Panc1 (cell line): ENCODE measurements at regions of chr7 and their contacts with region 1.

Region 1: GRCh38 chr7:16801111-16801542 is 3.7 kb downstream of the AGR2 start:
- DNase-seq: no peak
- ATAC-seq: peak; percentile 43; the same call in 1 of the 2 replicates
- H3K4me3 ChIP-seq: no peak overlapping the region
- H3K27ac ChIP-seq: peak overlapping the region; percentile 75
- H3K4me1 ChIP-seq: peaks cover 36% of the 10 kb centered on the region
- H3K27me3 ChIP-seq: no peaks in the 10 kb centered on the region
- CTCF ChIP-seq: peak; percentile 75; the same call in 1 of the 2 replicates

Region 2: DNA sequence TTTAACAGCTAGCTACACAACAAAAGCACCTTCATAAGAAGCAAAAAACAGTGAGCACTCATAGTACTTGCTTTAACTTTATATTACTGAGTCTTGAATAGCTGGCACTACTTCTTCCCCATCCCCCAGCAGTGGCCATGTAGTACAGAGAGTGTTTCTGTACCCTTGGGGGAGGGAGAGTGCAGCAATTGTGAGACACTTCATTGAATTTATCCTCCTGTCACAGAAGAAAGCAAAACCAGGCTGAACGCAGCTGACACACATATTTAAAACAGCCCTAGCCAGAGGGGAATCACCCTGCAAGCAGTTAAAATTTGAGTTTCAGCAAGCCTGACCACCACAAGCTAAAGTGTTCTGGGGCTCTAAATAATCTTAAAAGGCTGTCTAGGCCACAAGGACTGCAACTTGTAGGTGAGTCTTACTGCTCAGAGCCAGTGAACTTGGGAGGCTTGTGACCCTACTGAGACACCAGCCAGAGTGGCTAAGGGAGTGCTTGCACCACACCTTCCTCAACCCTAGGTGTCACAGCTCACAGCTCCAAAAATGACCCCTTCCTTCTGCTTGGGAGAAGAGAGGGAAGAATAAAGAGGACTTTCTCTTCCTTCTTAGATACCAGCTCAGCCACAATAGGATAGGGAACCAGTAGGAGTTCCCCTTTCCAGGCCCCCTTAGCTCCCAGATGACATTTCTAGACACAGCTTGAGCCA is 1017.0 kb before region 1 on chr7:
- CTCF ChIA-PET with region 1: no interaction called
- POLR2A ChIA-PET with region 1: no interaction called
- in situ Hi-C with region 1: no loop called
- intact Hi-C with region 1: no loop called
- DNase-seq: no peak
- ATAC-seq: no peak
- H3K4me3 ChIP-seq: no peak overlapping the region
- H3K27ac ChIP-seq: no peak overlapping the region
- H3K4me1 ChIP-seq: no peaks in the 10 kb centered on the region
- H3K27me3 ChIP-seq: no peaks in the 10 kb centered on the region
- CTCF ChIP-seq: no peak

Region 3: DNA sequence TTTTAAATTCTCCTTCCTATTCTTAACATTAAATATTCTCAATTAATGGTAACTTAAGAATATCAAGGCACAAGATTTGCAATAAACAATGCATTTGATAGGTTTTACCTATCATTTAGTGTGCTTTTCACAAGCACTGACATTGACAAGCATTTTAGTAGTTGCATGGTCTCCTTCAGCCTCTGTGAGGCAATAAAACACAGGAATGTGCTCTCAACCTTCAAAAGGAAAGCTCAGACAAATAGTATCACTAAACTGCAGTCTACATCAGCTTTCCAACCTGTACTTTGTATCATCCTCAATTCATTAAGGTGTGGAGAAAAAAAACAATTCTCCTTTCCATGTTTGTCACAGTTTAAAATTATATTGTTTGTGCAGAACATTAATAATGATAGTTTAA is 98.7 kb before region 1 on chr7:
- CTCF ChIA-PET with region 1: interaction called, 5 read pairs
- POLR2A ChIA-PET with region 1: no interaction called
- in situ Hi-C with region 1: no loop called
- intact Hi-C with region 1: loop called (anchors 5 kb)
- DNase-seq: no peak
- ATAC-seq: no peak
- H3K4me3 ChIP-seq: no peak overlapping the region
- H3K27ac ChIP-seq: no peak overlapping the region
- H3K4me1 ChIP-seq: no peaks in the 10 kb centered on the region
- H3K27me3 ChIP-seq: no peaks in the 10 kb centered on the region
- CTCF ChIP-seq: peak; percentile 46; the same call in 1 of the 2 replicates

Region 4: GRCh38 chr7:16847366-16847864 is 46.3 kb after region 1 on chr7:
- CTCF ChIA-PET with region 1: interaction called, 3 read pairs
- POLR2A ChIA-PET with region 1: interaction called, 3 read pairs
- in situ Hi-C with region 1: no loop called
- intact Hi-C with region 1: loop called (anchors 2 kb)
- DNase-seq: peak; percentile 89
- ATAC-seq: peak; percentile 99
- H3K4me3 ChIP-seq: peak overlapping the region; percentile 6 to 40; a peak in 3 of 4 replicates
- H3K27ac ChIP-seq: peak overlapping the region; percentile 95
- H3K4me1 ChIP-seq: peaks cover 24% of the 10 kb centered on the region
- H3K27me3 ChIP-seq: no peaks in the 10 kb centered on the region
- CTCF ChIP-seq: no peak